Calu3 (cell line): ENCODE measurements at regions of chr1 and their contacts with region 1.

Region 1: GRCh38 chr1:44213222-44214112 is at the start of gene DMAP1:
- DNase-seq: peak; percentile 79
- H3K4me3 Mint-ChIP-seq: peak within 1 kb of the TSS; percentile 81
- H3K27ac Mint-ChIP-seq: peak within 1 kb of the TSS; percentile 72
- H3K4me1 Mint-ChIP-seq: peaks cover 17% of the 10 kb centered on the region
- H3K27me3 Mint-ChIP-seq: no peaks in the 10 kb centered on the region
- CTCF ChIP-seq: no peak
- total RNA-seq, gene DMAP1: 40.9 and 42.9 TPM in 2 replicates

Region 2: DNA sequence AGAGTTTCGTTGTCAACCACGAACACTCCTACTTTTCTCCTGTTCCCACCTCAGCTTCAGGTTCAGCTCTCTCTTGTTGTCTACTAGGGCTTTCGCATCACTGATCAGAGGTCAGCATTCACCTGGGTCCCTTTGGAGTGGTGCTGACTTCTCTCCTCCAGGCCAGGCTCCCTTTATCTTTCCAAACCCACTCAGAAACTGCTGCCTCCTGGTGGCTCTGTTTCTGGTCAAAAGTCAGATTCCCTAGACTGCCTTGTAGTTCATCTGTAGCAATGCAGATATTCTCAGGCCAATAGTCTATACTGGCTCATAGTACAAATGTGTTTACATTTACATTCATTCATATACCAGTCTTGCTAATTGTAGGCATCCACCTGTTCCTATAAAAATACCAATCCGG is 148.0 kb after region 1 on chr1:
- CTCF ChIA-PET with region 1: interaction called, 4 read pairs
- intact Hi-C with region 1: loop called (anchors 5 kb)
- DNase-seq: peak; percentile 13
- H3K4me3 Mint-ChIP-seq: no peak overlapping the region
- H3K27ac Mint-ChIP-seq: no peak overlapping the region
- H3K4me1 Mint-ChIP-seq: peaks cover 18% of the 10 kb centered on the region
- H3K27me3 Mint-ChIP-seq: peaks cover 26% of the 10 kb centered on the region
- CTCF ChIP-seq: no peak

Region 3: DNA sequence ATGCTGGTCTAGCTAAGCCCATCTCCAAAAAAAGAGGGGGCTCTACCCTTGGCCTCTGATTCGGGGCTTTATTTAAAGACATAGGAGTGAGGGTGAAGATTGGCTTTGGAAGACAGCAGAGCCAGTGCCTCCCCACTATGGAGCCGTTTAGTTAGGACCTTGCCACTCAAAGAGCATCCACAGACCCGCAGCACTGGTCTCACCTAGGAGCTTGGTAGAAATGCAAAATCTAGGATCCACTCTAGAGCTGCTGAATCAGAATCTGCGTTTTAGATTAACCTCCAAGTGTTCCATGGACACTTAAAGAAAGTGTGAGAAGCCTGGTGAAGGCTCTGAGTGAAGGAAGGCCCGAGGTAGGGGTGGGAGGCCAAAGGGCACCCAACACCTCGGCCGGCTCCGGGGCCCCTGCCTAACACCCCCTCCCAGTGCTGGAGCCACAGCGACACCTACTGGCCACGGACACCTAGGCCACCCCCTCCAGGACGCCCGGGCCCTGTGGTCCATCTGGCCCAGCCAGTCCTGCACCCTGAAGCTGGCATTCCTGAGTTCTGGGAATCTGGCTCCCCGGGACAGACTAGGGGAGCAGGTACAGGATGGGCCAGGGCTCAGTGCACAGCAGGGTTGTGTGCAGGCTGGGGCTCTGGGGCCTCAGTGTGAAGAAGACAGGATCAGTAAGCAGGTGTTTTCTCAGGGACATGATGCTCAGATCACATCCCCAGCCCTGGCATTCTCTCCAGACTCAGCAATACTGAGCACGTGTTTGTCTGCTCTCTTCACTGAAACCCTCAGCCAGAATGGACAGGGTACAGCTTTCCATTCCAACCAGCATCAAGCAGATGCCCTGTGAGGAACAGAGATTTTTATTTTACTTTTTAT is 381.6 kb after region 1 on chr1:
- CTCF ChIA-PET with region 1: interaction called, 12 read pairs
- intact Hi-C with region 1: loop called (anchors 1 kb)
- DNase-seq: peak; percentile 87
- H3K4me3 Mint-ChIP-seq: no peak overlapping the region
- H3K27ac Mint-ChIP-seq: no peak overlapping the region
- H3K4me1 Mint-ChIP-seq: no peaks in the 10 kb centered on the region
- H3K27me3 Mint-ChIP-seq: peaks cover 14% of the 10 kb centered on the region
- CTCF ChIP-seq: peak; percentile 87

Region 4: DNA sequence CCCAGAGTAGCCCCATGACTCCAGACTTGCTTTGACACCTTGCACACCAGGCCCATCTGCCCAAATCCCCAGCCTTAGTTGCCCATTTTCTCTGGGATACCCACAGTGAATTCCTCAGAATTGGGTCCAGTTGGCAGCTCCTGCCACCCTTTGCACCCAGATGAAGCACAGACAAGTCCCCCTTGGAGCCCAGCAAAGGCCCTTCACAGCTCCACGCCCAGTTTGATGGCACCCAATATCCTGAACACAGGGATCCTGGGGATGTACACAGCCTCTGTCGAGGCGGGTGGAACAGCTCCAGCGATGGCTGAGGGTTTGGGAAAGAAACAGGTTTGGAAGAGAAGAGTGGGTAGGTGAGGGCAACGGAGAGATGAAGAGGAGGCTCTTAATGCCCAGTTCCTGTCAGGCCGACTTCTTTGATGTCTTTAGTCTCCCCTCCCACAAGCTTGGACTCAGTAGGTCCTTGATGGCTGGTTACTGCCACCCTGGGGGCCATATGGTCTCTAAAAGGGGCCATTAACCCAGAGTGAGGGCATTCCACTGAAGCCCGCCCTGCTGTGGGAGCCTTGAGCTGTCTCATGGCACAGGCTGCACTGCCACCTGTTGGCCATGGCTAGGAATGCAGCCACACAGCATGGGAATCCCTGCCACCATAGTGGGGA is 439.1 kb after region 1 on chr1:
- CTCF ChIA-PET with region 1: interaction called, 4 read pairs
- intact Hi-C with region 1: loop called (anchors 2 kb)
- DNase-seq: peak; percentile 80
- H3K4me3 Mint-ChIP-seq: no peak overlapping the region
- H3K27ac Mint-ChIP-seq: no peak overlapping the region
- H3K4me1 Mint-ChIP-seq: no peaks in the 10 kb centered on the region
- H3K27me3 Mint-ChIP-seq: no peaks in the 10 kb centered on the region
- CTCF ChIP-seq: peak; percentile 90